ENCODE measurements at regions of chr2 and their contacts with region 1.

Region 1: DNA sequence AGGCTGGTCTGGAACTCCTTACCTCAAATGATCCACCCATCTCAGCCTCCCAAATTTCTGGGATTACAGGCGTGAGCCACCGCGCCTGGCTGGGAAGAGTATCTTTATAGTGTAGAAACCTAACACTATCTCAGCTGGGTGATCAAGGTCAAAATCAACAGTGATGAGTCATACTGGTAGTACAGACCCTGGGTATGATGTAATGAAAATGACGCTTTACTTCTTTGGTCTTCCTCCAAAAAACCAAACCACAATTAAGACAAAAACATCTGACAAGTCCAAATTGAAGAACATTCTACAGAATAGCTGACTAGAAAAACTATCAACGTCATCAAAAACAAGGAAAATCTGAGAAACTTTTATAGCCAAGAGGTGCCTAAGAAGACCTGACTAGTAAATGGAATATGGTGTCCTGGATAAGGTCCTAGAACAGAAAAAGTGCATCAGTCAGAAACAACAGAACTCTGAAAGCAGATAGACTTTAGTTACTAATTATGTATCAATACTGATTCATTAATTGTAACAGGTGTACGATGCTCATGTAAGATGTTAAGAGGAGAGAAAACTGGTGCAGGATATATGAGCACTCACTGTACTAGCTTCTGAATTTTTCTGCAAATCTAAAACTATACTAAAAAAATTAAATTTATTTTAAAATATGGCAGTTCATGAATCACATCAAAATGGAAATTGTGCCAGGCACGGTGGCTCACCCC is 25.4 kb downstream of the PDCL3 start:
- DNase-seq: peak; percentile 47
- ATAC-seq: peak; percentile 91
- H3K4me3 Mint-ChIP-seq: no peak overlapping the region
- H3K27ac Mint-ChIP-seq: peak overlapping the region; percentile 16
- H3K4me1 Mint-ChIP-seq: peaks cover 53% of the 10 kb centered on the region
- H3K27me3 Mint-ChIP-seq: peaks cover 4% of the 10 kb centered on the region

Region 2: DNA sequence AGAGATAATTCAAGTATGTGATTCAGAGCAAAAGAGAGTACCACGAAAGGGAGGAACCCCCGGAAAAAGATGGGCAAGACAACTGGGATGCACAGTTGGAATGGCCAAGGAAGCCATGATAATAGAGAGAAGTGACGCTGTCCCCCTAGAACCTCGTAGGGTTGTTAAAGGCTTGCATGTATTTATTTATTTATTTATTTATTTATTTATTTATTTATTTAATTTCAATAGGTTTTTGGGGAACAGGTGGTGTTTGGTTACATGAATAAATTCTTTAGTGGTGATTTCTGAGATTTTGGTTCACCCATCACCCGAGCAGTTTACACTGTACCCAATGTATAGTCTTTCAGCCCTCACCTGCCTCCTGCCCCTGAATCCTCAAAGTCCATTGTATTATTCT is 36.9 kb before region 1 on chr2:
- CTCF ChIA-PET with region 1: no interaction called
- POLR2A ChIA-PET with region 1: no interaction called
- DNase-seq: no peak
- ATAC-seq: no peak
- H3K4me3 Mint-ChIP-seq: no peak overlapping the region
- H3K27ac Mint-ChIP-seq: no peak overlapping the region
- H3K4me1 Mint-ChIP-seq: peaks cover 19% of the 10 kb centered on the region
- H3K27me3 Mint-ChIP-seq: peaks cover 6% of the 10 kb centered on the region

Region 3: DNA sequence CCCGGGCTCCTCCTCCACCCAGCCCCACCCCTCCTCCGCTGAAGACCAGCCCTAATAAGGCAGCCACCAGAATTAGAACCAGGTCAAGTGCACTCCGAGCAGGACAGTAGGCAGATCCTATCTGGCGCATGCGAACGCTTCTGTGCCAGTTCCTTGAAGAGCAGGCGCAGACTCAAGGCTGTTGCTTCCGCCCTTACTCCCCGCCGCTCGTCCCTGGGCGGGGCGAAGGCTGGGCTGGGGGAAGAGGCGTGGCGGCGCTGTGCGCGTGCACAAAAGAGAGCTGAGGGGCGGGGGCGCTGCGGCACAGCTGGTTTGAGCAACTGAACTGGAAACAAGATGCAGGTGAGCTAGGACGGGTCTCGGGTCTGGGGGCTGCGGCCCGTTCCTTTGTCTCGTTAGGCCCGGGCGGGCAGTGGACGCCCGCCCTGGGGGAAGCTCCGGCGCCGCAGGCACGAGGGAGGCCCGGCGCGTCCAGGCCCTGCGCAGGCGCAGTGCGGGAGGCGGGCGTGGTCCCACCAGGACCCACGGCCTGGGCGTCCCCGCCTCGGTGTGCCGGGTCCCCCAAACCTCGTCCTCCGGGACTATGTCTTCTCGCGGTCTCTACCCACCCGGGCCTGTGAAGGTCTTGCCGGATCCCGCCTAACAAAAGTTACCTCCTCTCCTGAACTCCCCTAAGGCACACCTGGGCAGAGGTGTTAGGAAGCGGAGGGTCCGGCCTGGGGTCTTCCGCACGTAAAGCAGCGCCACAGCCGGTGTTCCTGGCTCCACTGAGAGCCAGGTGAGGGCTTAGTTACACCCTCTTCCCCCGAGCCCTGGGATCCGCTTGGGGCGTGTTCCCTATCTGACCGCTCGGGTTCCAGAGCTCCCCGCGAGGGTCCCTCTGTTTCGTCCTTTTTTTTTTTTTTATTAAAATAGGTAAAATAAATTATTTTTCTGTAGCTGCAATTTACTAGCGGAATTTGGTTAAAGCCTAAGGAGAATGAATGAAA is 25.2 kb before region 1 on chr2 and contains the start of gene PDCL3:
- CTCF ChIA-PET with region 1: interaction called, 14 read pairs
- POLR2A ChIA-PET with region 1: interaction called, 6 read pairs
- DNase-seq: peak; percentile 96
- ATAC-seq: peak; percentile 93
- H3K4me3 Mint-ChIP-seq: peak within 1 kb of the TSS; percentile 84
- H3K27ac Mint-ChIP-seq: peak within 1 kb of the TSS; percentile 99
- H3K4me1 Mint-ChIP-seq: peaks cover 32% of the 10 kb centered on the region
- H3K27me3 Mint-ChIP-seq: no peaks in the 10 kb centered on the region
- total RNA-seq, gene PDCL3: 33.9 to 34.1 TPM

Region 4: GRCh38 chr2:100603948-100604633 is 15.9 kb after region 1 on chr2:
- CTCF ChIA-PET with region 1: interaction called, 29 read pairs
- POLR2A ChIA-PET with region 1: no interaction called
- DNase-seq: no peak
- ATAC-seq: no peak
- H3K4me3 Mint-ChIP-seq: no peak overlapping the region
- H3K27ac Mint-ChIP-seq: no peak overlapping the region
- H3K4me1 Mint-ChIP-seq: peaks cover 7% of the 10 kb centered on the region
- H3K27me3 Mint-ChIP-seq: no peaks in the 10 kb centered on the region